PC-9 (cell line): ENCODE measurements at regions of chr3 and their contacts with region 1.

Region 1: DNA sequence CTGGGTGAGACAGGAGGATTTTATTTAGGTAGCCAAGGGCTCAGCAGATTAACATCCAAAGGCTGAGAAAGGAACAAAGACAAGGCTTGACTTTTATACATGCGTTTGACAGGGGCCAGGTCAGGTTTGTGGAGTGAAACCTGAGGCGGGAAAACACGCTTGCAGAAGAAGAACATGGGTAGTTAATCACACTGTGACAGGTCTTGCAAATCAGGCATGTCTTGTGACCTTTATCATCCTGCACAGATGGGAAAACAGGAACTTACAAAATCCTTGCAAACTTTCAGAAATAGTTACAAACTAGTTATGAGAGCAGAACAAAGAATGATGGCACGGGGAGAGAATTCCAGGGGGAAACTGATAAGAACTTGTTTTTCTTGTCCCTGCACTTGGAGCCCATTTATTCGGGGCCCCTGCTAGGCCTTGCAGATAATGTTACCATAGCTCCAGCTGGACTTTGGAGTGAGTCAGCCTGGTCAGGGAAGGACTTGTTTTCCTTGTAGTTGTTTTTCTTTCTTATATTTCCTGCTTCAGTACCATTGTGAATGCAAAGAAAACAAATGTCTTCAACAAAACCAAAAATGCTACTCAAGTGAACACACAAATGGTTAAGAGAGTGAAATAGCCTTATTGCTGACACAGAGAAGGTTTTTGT is 965.9 kb upstream of the ROBO1 start:
- DNase-seq: peak; percentile 77 to 96
- H3K4me3 ChIP-seq: peak overlapping the region; percentile 23; the same call in 1 of the 2 replicates
- H3K27ac ChIP-seq: peak overlapping the region; percentile 87
- H3K4me1 ChIP-seq: peaks cover 36% of the 10 kb centered on the region
- H3K27me3 ChIP-seq: no peaks in the 10 kb centered on the region
- CTCF ChIP-seq: no peak

Region 2: DNA sequence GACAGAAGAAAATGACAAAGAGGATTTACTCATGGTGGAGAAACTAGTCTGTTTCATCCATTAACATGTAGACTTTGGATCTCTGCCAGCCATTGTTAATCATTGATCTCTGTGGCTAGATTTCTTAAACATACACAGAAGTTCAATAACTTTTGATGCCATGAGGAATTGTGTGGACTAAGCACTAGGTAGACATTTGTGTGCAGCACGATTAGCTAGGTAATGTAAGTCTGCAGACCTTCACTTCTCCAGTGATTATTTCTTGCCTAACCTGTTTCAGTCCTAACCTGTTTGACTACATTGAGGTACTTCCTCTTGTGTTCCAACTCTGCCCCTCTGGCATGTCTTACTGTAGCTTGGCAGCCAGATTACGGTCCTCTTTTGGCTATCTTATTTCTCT is 37.4 kb before region 1 on chr3:
- CTCF ChIA-PET with region 1: no interaction called
- POLR2A ChIA-PET with region 1: no interaction called
- intact Hi-C with region 1: loop called (anchors 1 kb)
- DNase-seq: peak; percentile 25 to 86
- H3K4me3 ChIP-seq: 0 out of 2 replicates have a peak overlapping the region, but pooled peaks have one; percentile 20
- H3K27ac ChIP-seq: no peak overlapping the region
- H3K4me1 ChIP-seq: peaks cover 15% of the 10 kb centered on the region
- H3K27me3 ChIP-seq: no peaks in the 10 kb centered on the region
- CTCF ChIP-seq: no peak

Region 3: GRCh38 chr3:80855482-80855881 is 121.8 kb after region 1 on chr3:
- CTCF ChIA-PET with region 1: no interaction called
- POLR2A ChIA-PET with region 1: no interaction called
- intact Hi-C with region 1: loop called (anchors 1 kb)
- DNase-seq: peak in 1 of 2 experiments; percentile 13
- H3K4me3 ChIP-seq: no peak overlapping the region
- H3K27ac ChIP-seq: no peak overlapping the region
- H3K4me1 ChIP-seq: peaks cover 8% of the 10 kb centered on the region; the same call in 1 of the 2 replicates
- H3K27me3 ChIP-seq: no peaks in the 10 kb centered on the region
- CTCF ChIP-seq: no peak